Colonic mucosa (tissue), 4 donors: ENCODE measurements at regions of chr6 and their contacts with region 1.

Region 1: DNA sequence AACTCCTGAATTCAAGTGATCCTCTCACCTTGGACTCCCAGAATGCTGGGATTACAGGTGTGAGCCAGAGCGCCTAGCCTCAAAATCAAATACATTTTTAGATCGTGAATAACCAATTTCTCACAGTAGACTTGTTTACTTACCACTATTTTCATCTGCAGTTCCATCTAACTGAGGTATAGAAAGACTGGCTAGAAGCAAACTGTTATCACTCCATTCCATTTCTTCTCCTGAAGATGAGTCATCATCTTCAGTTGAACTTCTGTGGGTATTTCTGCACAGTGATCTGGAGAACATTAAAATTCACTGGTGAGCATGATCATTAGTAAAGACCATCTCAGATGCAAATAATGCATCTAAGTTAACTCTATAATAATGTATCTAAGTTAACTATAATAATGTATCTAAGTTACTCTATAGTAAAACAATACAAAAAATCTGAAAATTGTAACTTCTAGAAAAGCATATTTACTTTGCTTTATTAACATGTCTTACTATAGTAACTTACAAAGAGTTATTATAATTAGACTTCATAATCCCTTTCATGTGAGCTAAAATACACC is 105.4 kb downstream of the REV3L start:
- DNase-seq: no peak
- H3K4me3 ChIP-seq: no peak overlapping the region
- H3K27ac ChIP-seq: no peak overlapping the region
- H3K4me1 ChIP-seq: no peaks in the 10 kb centered on the region
- H3K27me3 ChIP-seq: no peaks in the 10 kb centered on the region
- CTCF ChIP-seq: no peak

Region 2: GRCh38 chr6:110882271-110882613 is 495.4 kb before region 1 on chr6:
- intact Hi-C with region 1: no loop called
- DNase-seq: no peak
- H3K4me3 ChIP-seq: no peak overlapping the region
- H3K27ac ChIP-seq: no peak overlapping the region
- H3K4me1 ChIP-seq: peaks cover 44% of the 10 kb centered on the region
- H3K27me3 ChIP-seq: no peaks in the 10 kb centered on the region
- CTCF ChIP-seq: no peak

Region 3: DNA sequence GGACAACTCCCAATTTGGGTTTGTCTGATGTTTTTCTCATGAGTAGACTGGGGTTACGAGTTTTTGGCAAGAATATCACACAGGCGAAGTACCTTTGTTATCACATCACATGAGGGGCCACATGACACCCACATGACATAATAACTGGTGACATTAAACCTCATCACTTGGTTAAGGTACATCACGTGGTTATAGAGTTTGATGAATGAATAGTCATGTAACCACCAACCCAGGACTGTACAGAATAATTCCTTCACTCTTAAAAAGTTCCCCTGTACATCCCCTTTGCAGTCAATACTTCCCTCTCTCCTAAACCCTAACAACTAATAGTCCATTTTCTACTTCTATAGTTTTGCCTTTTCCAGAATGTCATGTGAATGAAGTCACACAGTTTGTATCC is 22.0 kb after region 1 on chr6:
- intact Hi-C with region 1: loop called (anchors 2 kb)
- DNase-seq: no peak
- H3K4me3 ChIP-seq: no peak overlapping the region
- H3K27ac ChIP-seq: no peak overlapping the region
- H3K4me1 ChIP-seq: no peaks in the 10 kb centered on the region
- H3K27me3 ChIP-seq: no peaks in the 10 kb centered on the region
- CTCF ChIP-seq: no peak

Region 4: GRCh38 chr6:111417181-111417585 is 39.5 kb after region 1 on chr6:
- intact Hi-C with region 1: no loop called
- DNase-seq: peak; percentile 25
- H3K4me3 ChIP-seq: no peak overlapping the region
- H3K27ac ChIP-seq: no peak overlapping the region
- H3K4me1 ChIP-seq: no peaks in the 10 kb centered on the region
- H3K27me3 ChIP-seq: no peaks in the 10 kb centered on the region
- CTCF ChIP-seq: no peak

Region 5: GRCh38 chr6:111683749-111684267 is 306.2 kb after region 1 on chr6:
- intact Hi-C with region 1: no loop called
- DNase-seq: no peak
- H3K4me3 ChIP-seq: no peak overlapping the region
- H3K27ac ChIP-seq: no peak overlapping the region
- H3K4me1 ChIP-seq: peaks cover 6% of the 10 kb centered on the region
- H3K27me3 ChIP-seq: no peaks in the 10 kb centered on the region
- CTCF ChIP-seq: no peak